ENCODE measurements at regions of chr1 and their contacts with region 1.

Region 1: DNA sequence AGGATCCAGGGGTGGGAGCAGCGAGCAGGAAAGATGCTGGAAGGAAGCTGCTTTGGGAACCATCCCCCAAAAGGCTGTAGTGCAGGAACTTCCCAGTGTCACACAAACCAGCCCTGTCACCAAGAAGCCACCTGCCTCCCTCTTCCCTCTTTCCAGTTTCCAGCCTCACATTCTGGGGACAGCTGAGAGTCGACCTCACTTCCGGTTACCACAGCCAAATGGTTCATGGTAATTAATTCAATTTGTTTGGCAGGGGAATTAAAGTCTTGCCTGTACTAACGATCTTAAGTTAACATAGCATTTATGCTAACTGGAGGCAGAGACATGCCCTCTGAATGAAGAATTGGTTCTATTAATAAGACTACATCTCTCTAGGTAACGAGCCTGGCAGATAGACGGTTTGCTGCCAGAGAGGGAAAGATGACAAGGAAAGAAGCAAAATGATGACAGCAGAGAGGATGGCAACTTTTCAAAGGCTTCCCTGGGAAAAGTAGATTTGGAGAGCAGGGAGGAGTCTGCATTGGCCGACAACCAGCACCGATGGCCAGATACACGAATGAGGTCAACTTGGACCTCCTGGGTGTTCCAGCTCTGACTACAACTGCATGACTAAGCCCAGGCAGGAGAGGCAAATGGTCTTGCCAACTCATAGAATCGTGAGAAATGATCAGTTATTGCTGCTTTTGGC is 64.1 kb downstream of the TMCO4 start:
- DNase-seq: peak; percentile 54
- H3K4me3 ChIP-seq: no peak overlapping the region
- H3K27ac ChIP-seq: no peak overlapping the region
- H3K4me1 ChIP-seq: peaks cover 15% of the 10 kb centered on the region
- H3K27me3 ChIP-seq: no peaks in the 10 kb centered on the region
- CTCF ChIP-seq: no peak

Region 2: DNA sequence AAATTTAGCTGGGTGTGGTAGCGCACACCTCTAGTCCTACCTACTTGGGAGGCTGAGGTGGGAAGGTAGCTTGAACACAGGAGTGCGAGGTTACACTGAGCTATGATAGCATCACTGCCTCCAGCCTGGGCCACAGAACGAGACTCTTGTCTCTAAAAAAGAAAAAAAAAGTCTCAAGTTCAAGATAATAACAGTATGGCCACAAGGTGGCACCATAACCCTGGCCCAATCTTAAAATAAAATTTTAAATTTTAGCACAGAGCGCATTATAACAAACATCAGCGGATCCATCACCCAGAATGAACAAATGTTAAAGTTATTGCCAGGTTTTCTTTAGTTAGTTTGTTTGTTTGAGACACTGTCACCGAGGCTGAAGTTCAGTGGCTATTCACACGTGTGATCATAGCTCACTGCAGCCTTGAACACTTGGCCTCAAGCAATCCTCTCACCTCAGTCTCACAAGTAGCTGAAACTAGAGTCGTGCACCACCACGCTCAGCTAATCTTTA is 73.8 kb before region 1 on chr1:
- CTCF ChIA-PET with region 1: no interaction called
- dilution Hi-C with region 1: loop called (anchors 5 kb)
- in situ Hi-C with region 1: no loop called
- intact Hi-C with region 1: no loop called
- DNase-seq: no peak
- H3K4me3 ChIP-seq: no peak overlapping the region
- H3K27ac ChIP-seq: no peak overlapping the region
- H3K4me1 ChIP-seq: peaks cover 33% of the 10 kb centered on the region
- H3K27me3 ChIP-seq: peaks cover 19% of the 10 kb centered on the region
- CTCF ChIP-seq: peak; percentile 65 to 68

Region 3: DNA sequence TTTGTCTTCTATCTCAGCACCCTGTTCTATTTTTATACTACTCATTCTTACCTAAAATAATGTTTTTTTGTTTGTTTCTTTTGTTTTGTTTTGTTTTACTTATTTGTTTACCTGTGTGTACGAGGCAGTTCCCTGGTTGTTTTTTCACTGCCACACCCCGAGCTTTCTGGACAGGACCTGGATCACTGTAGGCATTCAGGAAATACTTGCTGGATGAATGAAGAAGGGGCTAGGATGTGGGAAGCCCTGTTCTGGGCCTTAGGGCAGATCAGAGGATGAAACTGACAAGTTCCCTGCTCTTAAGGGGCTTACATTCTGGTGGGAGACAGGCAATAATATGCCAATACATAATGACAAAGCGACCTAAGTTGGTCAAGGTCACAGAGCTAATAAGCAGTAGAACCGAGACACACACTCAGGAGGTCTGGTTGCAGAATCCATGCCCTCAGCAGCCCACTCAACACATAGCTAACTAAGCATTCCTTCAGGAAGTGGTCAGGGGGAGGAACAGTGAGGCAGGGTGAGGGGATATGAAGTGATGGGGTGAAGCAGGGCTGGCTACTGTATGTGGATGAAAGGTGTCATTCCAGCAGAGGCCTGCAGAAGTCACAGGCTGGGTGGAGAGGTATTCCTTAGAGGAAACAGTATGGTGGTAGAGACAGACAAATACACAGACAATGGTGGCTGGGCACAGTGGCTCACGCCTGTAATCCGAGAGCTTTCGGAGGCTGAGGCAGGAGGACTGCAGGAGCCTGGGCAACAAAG is 49.9 kb after region 1 on chr1:
- CTCF ChIA-PET with region 1: no interaction called
- dilution Hi-C with region 1: no loop called
- in situ Hi-C with region 1: no loop called
- intact Hi-C with region 1: no loop called
- DNase-seq: no peak
- H3K4me3 ChIP-seq: no peak overlapping the region
- H3K27ac ChIP-seq: no peak overlapping the region
- H3K4me1 ChIP-seq: no peaks in the 10 kb centered on the region
- H3K27me3 ChIP-seq: no peaks in the 10 kb centered on the region
- CTCF ChIP-seq: no peak

Region 4: DNA sequence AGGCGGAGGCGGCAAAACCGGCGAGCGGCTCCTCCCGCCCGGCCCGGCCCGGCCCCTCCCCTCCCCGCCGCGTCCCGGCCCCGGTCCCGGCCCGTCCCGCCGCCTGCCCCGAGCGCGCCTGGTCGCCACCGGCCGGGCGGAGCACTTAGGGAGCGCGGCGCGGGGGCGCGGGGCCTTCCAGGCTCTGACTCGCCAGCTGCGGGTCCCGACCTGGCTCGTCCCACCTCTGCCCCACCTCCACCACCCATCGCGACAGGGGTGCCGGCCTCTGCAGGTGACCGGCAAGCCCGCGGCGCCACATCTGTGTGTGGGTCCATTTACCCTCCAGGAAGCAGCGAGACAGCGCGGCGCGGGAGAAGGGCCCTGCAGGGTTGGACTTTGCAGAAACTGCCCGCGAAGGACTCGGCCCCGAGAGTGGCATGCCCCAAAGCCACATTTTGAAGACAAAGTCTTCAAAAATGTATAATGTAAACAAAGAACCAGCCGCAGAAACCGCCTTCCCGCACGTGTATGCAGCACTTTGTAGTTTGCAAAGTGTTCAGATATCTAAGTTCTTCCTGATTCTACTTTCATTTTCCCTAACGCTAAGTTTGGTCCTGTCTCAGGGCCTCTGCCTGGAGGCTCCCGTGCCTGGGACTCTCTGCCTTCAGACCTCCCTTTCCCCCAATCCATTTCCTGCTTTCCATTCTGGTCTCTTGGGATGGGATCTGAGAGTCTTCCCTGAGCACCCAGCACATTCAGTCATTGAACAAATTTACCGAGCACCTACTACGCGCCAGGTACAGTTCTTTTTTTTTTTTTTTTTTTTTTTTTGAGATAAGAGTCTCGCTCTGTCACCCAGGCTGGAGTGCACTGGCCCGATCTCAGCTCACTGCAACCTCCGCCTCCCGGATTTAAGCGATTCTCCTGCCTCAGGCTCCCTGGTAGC is 64.6 kb after region 1 on chr1 and contains the start of gene TMCO4:
- CTCF ChIA-PET with region 1: no interaction called
- dilution Hi-C with region 1: no loop called
- in situ Hi-C with region 1: no loop called
- intact Hi-C with region 1: loop called (anchors 5 kb)
- DNase-seq: peak; percentile 50
- H3K4me3 ChIP-seq: peak within 1 kb of the TSS; percentile 54 to 73 (median 62)
- H3K27ac ChIP-seq: no peak within 1 kb of the TSS
- H3K4me1 ChIP-seq: peaks cover 4% of the 10 kb centered on the region
- H3K27me3 ChIP-seq: no peaks in the 10 kb centered on the region
- CTCF ChIP-seq: no peak
- total RNA-seq, gene TMCO4: 5.7 to 16.2 TPM

Region 5: GRCh38 chr1:19824541-19824940 is 89.0 kb after region 1 on chr1:
- CTCF ChIA-PET with region 1: no interaction called
- dilution Hi-C with region 1: loop called (anchors 5 kb)
- in situ Hi-C with region 1: no loop called
- intact Hi-C with region 1: no loop called
- DNase-seq: no peak
- H3K4me3 ChIP-seq: no peak overlapping the region
- H3K27ac ChIP-seq: no peak overlapping the region
- H3K4me1 ChIP-seq: no peaks in the 10 kb centered on the region
- H3K27me3 ChIP-seq: no peaks in the 10 kb centered on the region
- CTCF ChIP-seq: no peak

Measured in mammary epithelial cell (primary cell).